ENCODE measurements at regions of chr11 and their contacts with region 1.

Region 1: DNA sequence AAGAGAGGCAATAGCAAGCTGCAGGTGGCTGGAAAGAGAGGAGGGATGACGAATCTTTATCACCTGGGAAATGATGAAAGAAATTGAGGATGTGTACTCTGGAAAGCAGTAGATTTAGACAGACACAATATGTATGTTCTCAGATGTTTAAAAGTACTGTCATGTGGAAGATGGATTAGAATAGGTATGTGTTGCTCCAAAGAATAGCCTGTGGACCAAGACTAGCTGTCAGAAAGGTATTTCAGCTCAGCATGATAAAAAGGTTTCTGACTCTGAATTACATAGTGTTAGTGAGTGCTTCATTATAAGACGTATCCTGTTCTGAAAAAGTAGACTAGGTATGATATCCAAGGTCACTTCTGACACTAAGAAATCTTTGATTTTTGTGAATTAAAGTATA is 322.4 kb downstream of the CNTN5 start:
- DNase-seq: no peak
- H3K4me3 Mint-ChIP-seq: no peak overlapping the region
- H3K27ac Mint-ChIP-seq: no peak overlapping the region
- H3K4me1 Mint-ChIP-seq: no peaks in the 10 kb centered on the region
- H3K27me3 Mint-ChIP-seq: peaks cover 12% of the 10 kb centered on the region
- CTCF ChIP-seq: no peak

Region 2: DNA sequence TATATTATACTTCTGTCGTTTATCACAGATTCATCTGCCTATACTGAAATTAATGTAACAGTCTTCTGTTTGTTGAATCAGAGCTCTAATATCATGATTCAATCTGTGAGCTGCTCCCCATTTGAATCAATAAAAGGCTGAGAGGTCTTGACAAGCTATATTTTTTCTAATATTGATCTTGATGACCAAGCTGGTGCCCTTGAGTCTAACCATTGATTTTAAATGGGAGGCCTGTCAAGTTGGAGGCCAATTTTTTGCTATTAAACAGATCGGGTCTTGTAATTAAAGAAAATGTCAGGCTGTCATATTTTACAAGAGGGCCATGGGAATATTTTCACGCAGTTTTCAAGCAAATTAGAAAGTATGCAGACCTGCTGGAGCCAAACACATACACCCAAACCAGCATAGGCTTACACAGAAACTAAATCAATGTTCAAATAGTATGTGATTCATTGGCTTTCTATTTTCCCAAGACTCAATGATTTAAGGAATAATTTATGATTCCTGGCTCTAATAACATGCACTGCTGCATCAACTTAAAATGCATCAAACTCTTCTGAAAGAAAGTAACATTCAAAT is 35.5 kb before region 1 on chr11:
- CTCF ChIA-PET with region 1: no interaction called
- POLR2A ChIA-PET with region 1: no interaction called
- intact Hi-C with region 1: loop called (anchors 5 kb)
- DNase-seq: no peak
- H3K4me3 Mint-ChIP-seq: no peak overlapping the region
- H3K27ac Mint-ChIP-seq: no peak overlapping the region
- H3K4me1 Mint-ChIP-seq: no peaks in the 10 kb centered on the region
- H3K27me3 Mint-ChIP-seq: peaks cover 58% of the 10 kb centered on the region
- CTCF ChIP-seq: no peak

Region 3: GRCh38 chr11:99366546-99366945 is 23.4 kb after region 1 on chr11:
- CTCF ChIA-PET with region 1: no interaction called
- POLR2A ChIA-PET with region 1: no interaction called
- intact Hi-C with region 1: no loop called
- DNase-seq: no peak
- H3K4me3 Mint-ChIP-seq: no peak overlapping the region
- H3K27ac Mint-ChIP-seq: no peak overlapping the region
- H3K4me1 Mint-ChIP-seq: no peaks in the 10 kb centered on the region
- H3K27me3 Mint-ChIP-seq: peaks cover 83% of the 10 kb centered on the region
- CTCF ChIP-seq: no peak